Cardiac septum (tissue), 1 donor: ENCODE measurements at regions of chr1 and their contacts with region 1.

Region 1: GRCh38 chr1:49163031-49163430 is 386.3 kb upstream of the BEND5 start:
- DNase-seq: no peak

Region 2: GRCh38 chr1:48878191-48878940 is 284.7 kb before region 1 on chr1:
- intact Hi-C with region 1: no loop called
- DNase-seq: no peak

Region 3: DNA sequence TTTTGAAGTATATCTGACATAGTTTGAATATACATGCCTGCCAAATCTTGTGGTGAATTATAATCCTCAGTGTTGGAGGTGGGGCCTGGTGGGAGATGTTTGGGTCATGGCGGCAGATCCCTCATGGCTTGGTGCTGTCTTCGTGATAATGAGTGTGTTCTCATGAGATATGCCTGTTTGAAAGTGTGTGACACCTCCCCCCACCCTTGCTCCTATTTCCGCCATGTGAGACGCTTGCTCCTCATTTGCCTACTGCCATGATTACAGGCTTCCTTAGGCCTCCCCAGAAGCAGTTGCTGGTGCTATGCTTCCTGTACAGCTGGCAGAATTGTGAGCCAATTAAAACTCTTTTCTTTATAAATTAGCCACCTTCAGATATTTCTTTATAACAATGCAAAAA is 50.3 kb after region 1 on chr1:
- intact Hi-C with region 1: loop called (anchors 5 kb)
- DNase-seq: no peak